ENCODE measurements at regions of chr3 and their contacts with region 1.

Region 1: GRCh38 chr3:186259612-186260383 is 102.2 kb downstream of the DGKG start:
- DNase-seq: peak; percentile 46 to 75
- H3K4me3 ChIP-seq: no peak overlapping the region
- H3K27ac ChIP-seq: no peak overlapping the region
- H3K4me1 ChIP-seq: peaks cover 0 to 4% (median 0%) of the 10 kb centered on the region in 4 donors
- H3K27me3 ChIP-seq: no peaks in the 10 kb centered on the region
- CTCF ChIP-seq: peak; percentile 76 to 87

Region 2: DNA sequence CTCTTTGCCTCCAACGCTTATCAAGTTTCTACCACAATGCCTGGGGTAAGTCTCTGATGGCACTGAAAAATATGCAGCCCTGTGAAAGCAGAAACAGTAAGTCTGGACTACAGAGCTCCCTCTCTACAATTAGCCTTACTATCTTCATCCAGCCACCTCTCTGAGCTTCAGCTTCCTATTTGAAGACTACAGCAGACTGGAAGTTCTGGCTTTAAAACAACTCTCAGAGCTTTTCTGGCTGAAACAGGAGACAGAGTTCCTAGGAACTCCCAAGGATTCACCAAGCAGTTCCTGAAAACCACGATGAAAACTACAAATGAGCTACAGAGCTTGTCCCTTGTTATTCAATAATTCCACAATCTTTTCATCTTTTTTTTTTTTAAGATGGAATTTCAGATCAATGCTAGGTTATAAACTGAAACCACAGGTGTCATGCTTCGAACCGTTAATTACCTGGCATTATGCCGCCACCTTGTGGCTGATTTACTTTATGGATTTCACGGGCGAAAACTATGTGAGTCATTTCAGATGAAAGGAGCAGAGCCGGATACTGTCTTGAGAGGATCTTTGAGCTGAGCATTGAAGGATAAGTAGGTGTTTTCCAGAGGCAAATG is 280.5 kb after region 1 on chr3:
- intact Hi-C with region 1: loop called (anchors 2 kb)
- DNase-seq: peak; percentile 64 to 76
- H3K4me3 ChIP-seq: peak overlapping the region; percentile 14 to 23
- H3K27ac ChIP-seq: no peak overlapping the region
- H3K4me1 ChIP-seq: peaks cover 0 to 12% (median 0%) of the 10 kb centered on the region in 4 donors
- H3K27me3 ChIP-seq: no peaks in the 10 kb centered on the region
- CTCF ChIP-seq: peak; percentile 68 to 81